Activated CD4-positive, alpha-beta memory T cell treated with anti-CD3 and anti-CD28 coated beads for 36 hours (primary cell): ENCODE measurements at regions of chr4 and their contacts with region 1.

Region 1: DNA sequence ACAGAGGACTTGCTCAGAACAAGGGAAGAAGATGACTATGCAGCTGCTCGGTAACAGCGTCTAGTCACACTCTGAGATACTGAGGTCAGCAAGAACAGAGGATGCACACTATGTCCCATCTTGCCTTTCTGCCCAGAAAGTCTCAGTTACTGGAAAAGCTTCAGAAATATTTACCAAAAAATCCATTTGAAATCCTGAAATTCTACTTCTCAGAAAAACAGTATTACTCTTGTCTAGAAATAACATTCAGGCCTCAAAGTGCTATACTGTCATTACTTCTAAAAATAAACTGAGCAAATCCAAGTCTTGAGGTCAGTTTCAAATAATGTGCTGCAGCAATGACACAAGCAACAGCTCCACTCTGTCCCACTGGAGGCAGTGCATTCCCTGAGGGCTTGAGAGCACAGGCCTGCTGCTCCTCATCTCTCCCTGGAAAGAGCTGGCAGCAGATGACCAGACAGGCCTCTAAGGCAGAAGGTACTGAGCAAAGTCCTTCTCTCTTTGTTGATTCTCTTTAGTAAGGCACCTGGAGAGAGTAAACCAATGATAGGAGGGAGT is 76.9 kb downstream of the CAMK2D start:
- DNase-seq: peak; percentile 72
- H3K4me3 Mint-ChIP-seq: peak overlapping the region; percentile 42
- H3K27ac Mint-ChIP-seq: peak overlapping the region; percentile 93
- H3K4me1 Mint-ChIP-seq: peaks cover 71% of the 10 kb centered on the region
- H3K27me3 Mint-ChIP-seq: no peaks in the 10 kb centered on the region

Region 2: GRCh38 chr4:112145326-112145819 is 1539.2 kb before region 1 on chr4 and contains the start of gene FAM241A:
- CTCF ChIA-PET with region 1: no interaction called
- POLR2A ChIA-PET with region 1: no interaction called
- intact Hi-C with region 1: loop called (anchors 5 kb)
- DNase-seq: peak; percentile 92
- H3K4me3 Mint-ChIP-seq: peak within 1 kb of the TSS; percentile 87
- H3K27ac Mint-ChIP-seq: peak within 1 kb of the TSS; percentile 84
- H3K4me1 Mint-ChIP-seq: peaks cover 42% of the 10 kb centered on the region
- H3K27me3 Mint-ChIP-seq: no peaks in the 10 kb centered on the region
- total RNA-seq, gene FAM241A: 3.1 to 3.5 TPM

Region 3: GRCh38 chr4:113212613-113213012 is 472.0 kb before region 1 on chr4:
- CTCF ChIA-PET with region 1: no interaction called
- POLR2A ChIA-PET with region 1: no interaction called
- intact Hi-C with region 1: no loop called
- DNase-seq: no peak
- H3K4me3 Mint-ChIP-seq: no peak overlapping the region
- H3K27ac Mint-ChIP-seq: no peak overlapping the region
- H3K4me1 Mint-ChIP-seq: no peaks in the 10 kb centered on the region
- H3K27me3 Mint-ChIP-seq: no peaks in the 10 kb centered on the region

Region 4: GRCh38 chr4:113445286-113445685 is 239.3 kb before region 1 on chr4:
- CTCF ChIA-PET with region 1: no interaction called
- POLR2A ChIA-PET with region 1: no interaction called
- intact Hi-C with region 1: loop called (anchors 1 kb)
- DNase-seq: peak; percentile 19
- H3K4me3 Mint-ChIP-seq: no peak overlapping the region
- H3K27ac Mint-ChIP-seq: peak overlapping the region; percentile 64
- H3K4me1 Mint-ChIP-seq: peaks cover 26% of the 10 kb centered on the region
- H3K27me3 Mint-ChIP-seq: no peaks in the 10 kb centered on the region

Region 5: DNA sequence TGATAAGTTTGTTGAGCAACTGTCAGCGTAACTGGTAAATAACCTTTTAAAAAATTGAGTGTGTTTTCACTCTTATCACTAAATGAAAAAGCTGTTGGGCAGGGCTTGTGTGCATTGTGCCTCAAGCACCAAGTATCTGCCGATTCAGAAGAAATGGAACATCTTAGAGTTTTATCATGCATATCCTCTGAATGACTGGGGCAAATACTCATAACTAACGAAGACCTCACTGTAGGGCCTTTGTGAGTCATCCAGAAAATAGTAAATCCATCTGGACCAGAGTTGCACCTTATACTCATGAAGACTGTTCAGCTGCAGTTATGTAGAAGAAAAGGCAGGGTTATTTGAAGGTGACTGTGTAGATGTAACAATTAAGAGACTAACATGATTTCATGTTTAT is 145.2 kb before region 1 on chr4:
- CTCF ChIA-PET with region 1: interaction called, 5 read pairs
- POLR2A ChIA-PET with region 1: interaction called, 4 read pairs
- intact Hi-C with region 1: loop called (anchors 1 kb)
- DNase-seq: peak; percentile 46
- H3K4me3 Mint-ChIP-seq: no peak overlapping the region
- H3K27ac Mint-ChIP-seq: peak overlapping the region; percentile 65
- H3K4me1 Mint-ChIP-seq: peaks cover 38% of the 10 kb centered on the region
- H3K27me3 Mint-ChIP-seq: no peaks in the 10 kb centered on the region

Region 6: GRCh38 chr4:113636438-113636818 is 48.2 kb before region 1 on chr4:
- CTCF ChIA-PET with region 1: no interaction called
- POLR2A ChIA-PET with region 1: no interaction called
- intact Hi-C with region 1: loop called (anchors 1 kb)
- DNase-seq: no peak
- H3K4me3 Mint-ChIP-seq: peak overlapping the region; percentile 21
- H3K27ac Mint-ChIP-seq: peak overlapping the region; percentile 75
- H3K4me1 Mint-ChIP-seq: peaks cover 41% of the 10 kb centered on the region
- H3K27me3 Mint-ChIP-seq: no peaks in the 10 kb centered on the region

Region 7: DNA sequence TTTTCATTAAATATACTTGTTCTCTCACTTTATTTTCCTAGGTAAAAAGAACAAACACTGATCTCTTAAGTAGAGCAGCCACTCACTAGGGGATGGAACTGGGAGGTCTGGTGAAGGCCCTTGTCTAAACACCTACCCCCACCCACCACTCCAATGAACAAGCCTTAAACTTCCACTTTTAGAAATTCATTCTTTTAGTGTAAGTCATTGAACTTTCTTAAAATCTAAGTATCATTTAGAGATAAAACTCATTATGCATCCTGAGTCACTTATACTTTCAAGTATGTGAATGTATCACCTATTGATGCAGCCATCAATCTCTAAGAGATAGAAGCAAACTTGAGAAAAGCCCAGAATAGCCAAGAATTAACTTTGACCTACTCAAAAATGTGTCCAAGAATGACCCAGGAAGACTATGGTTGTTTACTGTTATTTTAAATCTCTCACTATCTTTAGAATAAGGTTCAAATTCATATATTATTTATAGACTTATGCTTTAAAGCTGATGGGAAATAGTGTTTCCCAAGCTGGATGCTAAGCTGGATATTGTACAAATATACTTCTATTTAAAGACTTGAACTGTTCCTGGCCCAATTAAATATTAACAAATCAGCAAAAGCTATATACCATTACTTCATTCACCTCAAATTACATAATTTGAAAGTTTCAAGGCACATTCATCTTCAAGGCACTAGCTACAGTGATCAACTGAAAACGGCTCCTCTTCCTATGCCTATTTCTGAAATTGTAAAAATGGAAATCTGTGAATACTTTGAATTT is 27.5 kb after region 1 on chr4:
- CTCF ChIA-PET with region 1: interaction called, 3 read pairs
- POLR2A ChIA-PET with region 1: no interaction called
- intact Hi-C with region 1: loop called (anchors 1 kb)
- DNase-seq: no peak
- H3K4me3 Mint-ChIP-seq: no peak overlapping the region
- H3K27ac Mint-ChIP-seq: no peak overlapping the region
- H3K4me1 Mint-ChIP-seq: peaks cover 40% of the 10 kb centered on the region
- H3K27me3 Mint-ChIP-seq: no peaks in the 10 kb centered on the region

Region 8: DNA sequence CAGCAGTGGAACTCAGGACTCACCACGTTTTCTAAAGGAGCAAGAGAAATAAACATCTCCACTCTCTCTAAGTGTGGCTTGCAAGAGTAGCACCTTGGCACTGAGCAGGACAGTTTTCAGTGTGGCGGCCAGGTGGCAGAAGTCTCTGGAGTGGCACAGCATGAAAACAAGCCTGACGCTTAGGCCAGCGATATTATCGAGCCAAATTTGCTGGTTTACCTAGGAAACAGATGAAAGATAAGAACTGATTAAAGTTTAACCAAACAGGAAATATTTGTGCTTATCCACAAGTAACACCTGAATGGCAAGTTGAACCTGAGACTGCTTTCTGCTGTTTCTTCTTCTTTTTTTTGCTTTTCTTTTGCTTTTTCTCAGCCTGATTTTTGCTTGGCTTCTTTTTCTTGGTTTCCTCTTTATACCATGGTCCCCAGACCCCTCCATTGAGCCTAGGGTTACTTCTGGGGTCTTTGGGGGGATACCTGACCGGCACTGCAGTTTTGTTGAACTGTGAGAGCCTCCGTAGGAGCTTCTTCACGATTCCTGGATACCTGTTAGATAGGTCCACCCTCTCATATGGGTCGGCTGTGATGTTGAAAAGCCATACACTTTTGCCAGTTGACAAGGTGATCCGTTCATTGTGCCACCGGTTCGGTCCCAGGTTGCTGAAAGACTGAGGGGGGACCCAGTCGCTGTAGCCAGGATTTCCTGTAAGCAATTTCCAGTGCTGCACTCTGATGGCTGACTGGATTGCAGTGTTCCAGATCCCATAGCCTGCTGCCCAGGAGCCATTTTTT is 217.6 kb after region 1 on chr4:
- CTCF ChIA-PET with region 1: no interaction called
- POLR2A ChIA-PET with region 1: no interaction called
- intact Hi-C with region 1: loop called (anchors 2 kb)
- DNase-seq: peak; percentile 80
- H3K4me3 Mint-ChIP-seq: peak overlapping the region; percentile 76
- H3K27ac Mint-ChIP-seq: peak overlapping the region; percentile 68
- H3K4me1 Mint-ChIP-seq: peaks cover 62% of the 10 kb centered on the region
- H3K27me3 Mint-ChIP-seq: no peaks in the 10 kb centered on the region